Adrenal gland (tissue), 19 donors: ENCODE measurements at regions of chr14 and their contacts with region 1.

Region 1: GRCh38 chr14:55446218-55446654 is 5.8 kb upstream of the TBPL2 start:
- DNase-seq: peak; percentile 76 to 88 (median 85)
- H3K4me3 ChIP-seq: no peak overlapping the region
- H3K27ac ChIP-seq: peak overlapping the region; percentile 28 to 79 (median 71)
- H3K4me1 ChIP-seq: peaks cover 7 to 24% of the 10 kb centered on the region in 2 donors
- H3K27me3 ChIP-seq: no peaks in the 10 kb centered on the region
- CTCF ChIP-seq: peak; percentile 60 to 93 (median 79)
- POLR2A ChIP-seq: no peak

Region 2: GRCh38 chr14:55579724-55580469 is 133.7 kb after region 1 on chr14 and contains the start of gene KTN1:
- intact Hi-C with region 1: loop called in 1 of 2 experiments (anchors 10 kb)
- DNase-seq: peak; percentile 76 to 86 (median 83)
- H3K4me3 ChIP-seq: peak within 1 kb of the TSS; percentile 54 to 95 (median 76)
- H3K27ac ChIP-seq: peak within 1 kb of the TSS; percentile 72 to 98 (median 93)
- H3K4me1 ChIP-seq: peaks cover 21 to 36% of the 10 kb centered on the region in 2 donors
- H3K27me3 ChIP-seq: no peaks in the 10 kb centered on the region
- CTCF ChIP-seq: no peak
- POLR2A ChIP-seq: peak; percentile 51 to 69
- total RNA-seq, gene KTN1: 98.0 to 283 (median 158) TPM

Region 3: GRCh38 chr14:55624913-55625312 is 178.7 kb after region 1 on chr14:
- intact Hi-C with region 1: loop called in 1 of 2 experiments (anchors 10 kb)
- DNase-seq: no peak
- H3K4me3 ChIP-seq: no peak overlapping the region
- H3K27ac ChIP-seq: no peak overlapping the region
- H3K4me1 ChIP-seq: peaks cover 21 to 40% of the 10 kb centered on the region in 2 donors
- H3K27me3 ChIP-seq: no peaks in the 10 kb centered on the region
- CTCF ChIP-seq: no peak
- POLR2A ChIP-seq: no peak

Region 4: GRCh38 chr14:56474419-56475022 is 1028.3 kb after region 1 on chr14:
- intact Hi-C with region 1: loop called in 1 of 2 experiments (anchors 10 kb)
- DNase-seq: no peak
- H3K4me3 ChIP-seq: no peak overlapping the region
- H3K27ac ChIP-seq: no peak overlapping the region
- H3K4me1 ChIP-seq: no peaks in the 10 kb centered on the region
- H3K27me3 ChIP-seq: no peaks in the 10 kb centered on the region
- CTCF ChIP-seq: peak; percentile 61 to 84 (median 76)
- POLR2A ChIP-seq: no peak